Activated B cell treated with CpG ODN at 0.5 μM for 24 hours (primary cell): ENCODE measurements at regions of chr1 and their contacts with region 1.

Region 1: DNA sequence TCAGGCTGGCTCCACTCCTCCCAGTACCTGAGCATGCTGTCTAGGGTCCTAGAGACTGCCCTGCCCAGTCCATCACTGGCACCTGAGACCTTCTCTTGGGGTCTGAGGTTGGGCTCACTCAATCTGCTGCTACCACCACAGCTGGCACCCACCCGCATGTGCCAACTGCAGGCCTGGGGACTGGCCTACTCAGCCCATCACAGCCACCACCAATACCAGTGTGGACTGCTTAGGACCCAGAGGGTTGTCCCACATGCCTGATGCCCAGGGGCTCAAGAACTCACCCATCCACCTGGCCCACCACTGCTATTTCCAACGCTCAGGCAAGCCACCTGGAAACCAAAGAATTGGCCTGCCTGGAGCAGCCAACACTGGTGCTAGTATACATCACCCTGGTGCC is 63.5 kb downstream of the CYP4B1 start:
- DNase-seq: no peak
- ATAC-seq: no peak
- H3K4me3 Mint-ChIP-seq: no peak overlapping the region
- H3K27ac Mint-ChIP-seq: no peak overlapping the region
- H3K4me1 Mint-ChIP-seq: no peaks in the 10 kb centered on the region
- H3K27me3 Mint-ChIP-seq: peaks cover 22% of the 10 kb centered on the region
- CTCF ChIP-seq: no peak

Region 2: DNA sequence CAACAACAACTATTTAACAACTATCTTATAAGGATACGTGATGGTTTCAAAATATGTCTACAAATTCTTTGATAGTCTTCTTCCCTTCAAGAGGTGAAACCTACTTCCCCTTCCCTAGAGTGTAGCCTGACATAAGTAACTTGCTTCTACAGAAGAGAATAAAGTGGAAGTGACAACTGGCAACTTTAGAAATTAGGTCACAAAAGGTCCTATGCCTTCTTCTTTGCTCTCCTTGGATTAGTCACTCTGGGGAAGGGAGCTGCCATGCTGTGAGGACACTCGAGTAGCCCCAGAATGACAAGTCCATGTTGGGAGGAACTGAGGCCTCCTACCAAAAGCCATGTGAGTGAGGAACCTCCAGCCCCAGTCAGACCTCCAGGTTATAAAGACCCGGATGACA is 162.7 kb before region 1 on chr1:
- CTCF ChIA-PET with region 1: no interaction called
- POLR2A ChIA-PET with region 1: no interaction called
- intact Hi-C with region 1: no loop called
- DNase-seq: no peak
- ATAC-seq: no peak
- H3K4me3 Mint-ChIP-seq: no peak overlapping the region
- H3K27ac Mint-ChIP-seq: no peak overlapping the region
- H3K4me1 Mint-ChIP-seq: peaks cover 8% of the 10 kb centered on the region
- H3K27me3 Mint-ChIP-seq: no peaks in the 10 kb centered on the region
- CTCF ChIP-seq: no peak

Region 3: GRCh38 chr1:47113178-47113577 is 250.8 kb after region 1 on chr1:
- CTCF ChIA-PET with region 1: no interaction called
- POLR2A ChIA-PET with region 1: no interaction called
- intact Hi-C with region 1: loop called (anchors 5 kb)
- DNase-seq: no peak
- ATAC-seq: no peak
- H3K4me3 Mint-ChIP-seq: no peak overlapping the region
- H3K27ac Mint-ChIP-seq: no peak overlapping the region
- H3K4me1 Mint-ChIP-seq: no peaks in the 10 kb centered on the region
- H3K27me3 Mint-ChIP-seq: peaks cover 13% of the 10 kb centered on the region
- CTCF ChIP-seq: no peak